Common myeloid progenitor, CD34-positive (primary cell): ENCODE measurements at regions of chr7 and their contacts with region 1.

Region 1: GRCh38 chr7:30564243-30564892 is 30.3 kb upstream of the GARS1 start:
- DNase-seq: peak; percentile 76 to 87 (median 79)
- H3K4me3 ChIP-seq: no peak overlapping the region
- H3K27ac ChIP-seq: no peak overlapping the region
- H3K4me1 ChIP-seq: no peaks in the 10 kb centered on the region
- H3K27me3 ChIP-seq: no peaks in the 10 kb centered on the region

Region 2: DNA sequence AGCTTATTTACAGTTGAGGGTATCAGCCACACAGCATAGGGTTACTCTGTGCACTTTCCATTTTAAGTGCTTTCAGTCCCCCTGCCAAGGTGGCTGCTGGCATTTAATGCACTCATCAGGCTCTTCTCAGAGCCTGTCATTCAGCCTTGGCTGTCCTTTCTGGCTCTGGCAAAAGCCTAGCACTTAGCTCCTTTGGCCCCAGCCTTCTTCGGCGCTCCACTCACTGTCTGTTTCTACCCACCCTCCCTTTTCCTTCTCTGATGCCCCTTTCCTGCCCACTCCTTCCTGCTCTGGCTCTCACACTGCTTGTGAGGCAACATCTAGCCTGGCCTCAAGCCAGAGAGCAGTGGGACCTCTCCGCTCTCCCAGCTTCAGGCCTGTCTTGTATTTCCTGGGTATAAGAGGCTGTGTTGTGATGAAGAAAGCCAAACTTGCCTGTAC is 697.9 kb before region 1 on chr7:
- CTCF ChIA-PET with region 1: no interaction called
- POLR2A ChIA-PET with region 1: no interaction called
- DNase-seq: peak; percentile 56 to 86 (median 84)
- H3K4me3 ChIP-seq: peak overlapping the region in 1 of 7 experiments; percentile 46
- H3K27ac ChIP-seq: no peak overlapping the region
- H3K4me1 ChIP-seq: peaks cover 0 to 24% (median 15%) of the 10 kb centered on the region in 4 experiments
- H3K27me3 ChIP-seq: no peaks in the 10 kb centered on the region

Region 3: GRCh38 chr7:30252885-30253795 is 311.2 kb before region 1 on chr7:
- CTCF ChIA-PET with region 1: no interaction called
- POLR2A ChIA-PET with region 1: no interaction called
- DNase-seq: peak in 2 of 3 donors; percentile 24 to 50
- H3K4me3 ChIP-seq: no peak overlapping the region
- H3K27ac ChIP-seq: no peak overlapping the region
- H3K4me1 ChIP-seq: peaks cover 0 to 16% (median 6%) of the 10 kb centered on the region in 4 experiments
- H3K27me3 ChIP-seq: no peaks in the 10 kb centered on the region

Region 4: DNA sequence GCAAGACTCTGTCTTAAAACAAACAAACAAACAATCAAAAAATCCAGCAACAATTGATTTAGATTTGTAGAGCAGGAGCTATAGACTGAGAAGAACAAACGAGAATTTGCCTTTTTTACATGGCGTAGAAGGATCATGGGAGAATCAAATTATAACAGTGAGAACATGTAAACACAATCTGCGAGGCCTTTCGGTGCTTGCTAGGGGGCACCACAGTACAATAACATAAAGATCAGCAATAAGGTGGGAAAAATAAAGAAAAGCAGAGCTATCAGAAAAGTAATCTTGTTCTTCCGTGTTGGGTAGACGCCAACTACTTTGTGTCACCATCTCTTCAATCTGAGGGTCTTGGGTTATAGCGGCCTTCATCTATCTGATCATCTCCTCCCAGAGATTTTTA is 168.0 kb before region 1 on chr7:
- CTCF ChIA-PET with region 1: interaction called, 10 read pairs
- POLR2A ChIA-PET with region 1: no interaction called
- DNase-seq: peak; percentile 31 to 37 (median 36)
- H3K4me3 ChIP-seq: no peak overlapping the region
- H3K27ac ChIP-seq: no peak overlapping the region
- H3K4me1 ChIP-seq: no peaks in the 10 kb centered on the region
- H3K27me3 ChIP-seq: no peaks in the 10 kb centered on the region

Region 5: GRCh38 chr7:30548762-30549344 is 15.5 kb before region 1 on chr7:
- CTCF ChIA-PET with region 1: interaction called, 176 read pairs
- POLR2A ChIA-PET with region 1: no interaction called
- DNase-seq: peak; percentile 36 to 55 (median 51)
- H3K4me3 ChIP-seq: no peak overlapping the region
- H3K27ac ChIP-seq: no peak overlapping the region
- H3K4me1 ChIP-seq: peaks cover 0 to 11% (median 8%) of the 10 kb centered on the region in 4 experiments
- H3K27me3 ChIP-seq: no peaks in the 10 kb centered on the region

Region 6: DNA sequence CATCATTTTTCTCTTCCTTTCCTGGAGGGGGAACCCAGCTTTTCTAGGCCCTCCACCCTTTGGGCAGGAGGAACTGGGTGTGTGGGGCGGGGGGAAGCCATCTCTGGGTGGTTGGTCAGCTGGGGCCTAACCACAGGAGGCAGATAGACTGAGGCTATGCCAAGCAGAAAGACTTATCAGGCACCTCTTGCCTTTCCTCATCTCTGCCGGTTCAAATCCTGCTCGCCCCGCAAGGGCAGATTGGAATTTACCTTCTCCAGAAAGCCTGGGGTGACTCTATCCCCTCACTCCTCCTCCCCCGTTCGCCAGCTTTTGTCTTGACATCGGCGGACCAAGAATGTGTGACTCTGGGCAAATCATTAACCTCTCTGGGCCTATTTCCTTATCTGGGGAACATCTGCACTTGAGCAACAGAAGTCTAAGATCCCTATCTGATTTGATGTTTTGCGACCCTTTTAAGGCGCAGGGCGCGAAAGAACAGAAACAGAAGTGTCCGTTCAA is 29.7 kb after region 1 on chr7:
- CTCF ChIA-PET with region 1: no interaction called
- POLR2A ChIA-PET with region 1: no interaction called
- DNase-seq: no peak
- H3K4me3 ChIP-seq: peak overlapping the region; percentile 93 to 100 (median 98)
- H3K27ac ChIP-seq: peak overlapping the region; percentile 91 to 99
- H3K4me1 ChIP-seq: peaks cover 12 to 28% (median 22%) of the 10 kb centered on the region in 4 experiments
- H3K27me3 ChIP-seq: no peaks in the 10 kb centered on the region